ENCODE measurements at regions of chr14 and their contacts with region 1.

Region 1: GRCh38 chr14:30656190-30656632 is 34.1 kb downstream of the SCFD1 start:
- DNase-seq: peak in 1 of 2 experiments; percentile 3
- H3K4me3 ChIP-seq: no peak overlapping the region
- H3K27ac ChIP-seq: no peak overlapping the region
- H3K4me1 ChIP-seq: no peaks in the 10 kb centered on the region
- H3K27me3 ChIP-seq: no peaks in the 10 kb centered on the region
- CTCF ChIP-seq: peak; percentile 57

Region 2: DNA sequence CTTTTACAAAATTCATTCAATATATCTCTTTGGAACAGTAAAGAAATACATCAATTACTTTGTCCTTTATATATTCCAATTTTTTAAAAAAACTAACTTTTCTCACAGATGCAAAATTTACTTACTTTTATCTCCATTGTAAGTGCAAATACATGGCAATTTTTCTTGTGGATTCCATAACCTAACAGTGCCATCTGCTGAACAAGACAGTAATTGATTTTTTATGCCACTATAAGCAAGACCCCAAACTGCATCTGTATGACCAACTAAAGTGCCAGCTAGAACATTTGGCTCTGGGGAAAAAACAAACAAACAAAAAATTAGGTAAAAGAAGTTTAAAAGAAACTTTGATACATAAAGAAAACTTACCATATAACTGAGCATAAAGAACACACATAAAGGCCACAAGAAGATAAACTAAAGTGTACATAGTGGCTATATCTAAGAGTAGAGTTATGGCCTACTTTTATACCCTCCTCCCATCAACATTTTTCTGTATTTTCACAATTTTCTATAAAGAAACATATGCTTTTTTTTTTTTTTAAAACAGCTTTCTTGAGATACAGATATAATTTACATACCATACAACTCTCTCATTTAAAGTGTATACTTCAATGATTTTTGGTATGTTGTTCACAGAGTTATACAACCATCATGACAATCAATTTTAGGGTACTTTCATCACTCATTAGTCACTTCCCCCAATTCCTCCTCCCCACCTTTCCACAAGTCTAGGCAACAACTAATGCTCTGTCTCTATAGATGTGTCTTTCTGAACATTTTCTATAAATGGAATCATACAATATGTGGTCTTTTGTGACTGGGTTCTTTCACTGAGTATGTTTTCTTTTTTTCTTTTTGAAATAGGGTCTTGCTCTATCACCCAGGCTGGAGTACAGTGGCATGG is 250.8 kb after region 1 on chr14:
- CTCF ChIA-PET with region 1: no interaction called
- POLR2A ChIA-PET with region 1: no interaction called
- intact Hi-C with region 1: loop called (anchors 2 kb)
- DNase-seq: no peak
- H3K4me3 ChIP-seq: no peak overlapping the region
- H3K27ac ChIP-seq: no peak overlapping the region
- H3K4me1 ChIP-seq: no peaks in the 10 kb centered on the region
- H3K27me3 ChIP-seq: no peaks in the 10 kb centered on the region
- CTCF ChIP-seq: peak; percentile 46; the same call in 1 of the 2 replicates